ENCODE measurements at regions of chr1 and their contacts with region 1.

Region 1: DNA sequence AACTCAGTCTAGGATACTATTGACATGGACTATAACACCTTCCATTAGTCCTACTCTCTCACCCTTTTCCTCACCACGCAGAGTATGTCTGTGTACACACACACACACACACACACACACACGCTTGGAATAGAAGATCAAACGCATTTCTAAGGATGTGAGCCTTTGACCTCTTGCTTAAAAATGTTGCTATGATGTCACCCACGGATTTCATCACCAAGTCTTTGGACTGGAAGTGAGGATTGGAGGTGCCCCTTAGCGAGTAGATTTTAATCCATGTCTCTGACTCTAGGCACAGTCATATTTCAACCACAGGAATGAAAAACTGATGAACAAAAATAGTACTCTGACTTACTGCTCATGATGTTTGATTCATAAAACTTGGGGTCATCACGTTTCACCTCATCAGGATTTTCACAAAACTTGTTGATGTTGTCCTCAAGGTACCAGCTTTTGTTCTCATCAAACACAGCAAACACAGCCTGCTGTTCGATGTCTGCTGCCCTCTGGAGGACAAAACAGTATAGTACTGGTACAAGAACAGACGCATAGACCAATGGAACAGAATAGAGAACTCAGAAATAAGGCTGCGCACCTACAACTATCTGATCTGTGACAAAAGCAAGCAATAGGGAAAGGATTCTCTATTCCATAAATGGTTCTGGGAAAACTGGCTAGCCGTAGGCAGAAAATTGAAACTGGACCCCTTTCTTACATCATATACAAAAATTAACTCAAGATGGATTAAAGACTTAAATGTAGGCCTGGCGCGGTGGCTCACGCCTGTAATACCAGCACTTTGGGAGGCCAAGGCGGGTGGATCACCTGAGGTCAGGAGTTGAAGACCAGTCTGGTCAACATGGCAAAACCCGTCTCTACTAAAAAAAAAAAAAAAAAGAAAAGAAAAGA is 39.9 kb downstream of the F5 start:
- DNase-seq: peak; percentile 72 to 80
- H3K4me3 ChIP-seq: no peak overlapping the region
- H3K4me3 Mint-ChIP-seq: no peak overlapping the region
- H3K27ac Mint-ChIP-seq: no peak overlapping the region
- H3K4me1 ChIP-seq: peaks cover 27% of the 10 kb centered on the region
- H3K4me1 Mint-ChIP-seq: peaks cover 26% of the 10 kb centered on the region
- H3K27me3 ChIP-seq: no peaks in the 10 kb centered on the region
- H3K27me3 Mint-ChIP-seq: no peaks in the 10 kb centered on the region
- CTCF ChIP-seq: peak; percentile 80 to 82

Region 2: DNA sequence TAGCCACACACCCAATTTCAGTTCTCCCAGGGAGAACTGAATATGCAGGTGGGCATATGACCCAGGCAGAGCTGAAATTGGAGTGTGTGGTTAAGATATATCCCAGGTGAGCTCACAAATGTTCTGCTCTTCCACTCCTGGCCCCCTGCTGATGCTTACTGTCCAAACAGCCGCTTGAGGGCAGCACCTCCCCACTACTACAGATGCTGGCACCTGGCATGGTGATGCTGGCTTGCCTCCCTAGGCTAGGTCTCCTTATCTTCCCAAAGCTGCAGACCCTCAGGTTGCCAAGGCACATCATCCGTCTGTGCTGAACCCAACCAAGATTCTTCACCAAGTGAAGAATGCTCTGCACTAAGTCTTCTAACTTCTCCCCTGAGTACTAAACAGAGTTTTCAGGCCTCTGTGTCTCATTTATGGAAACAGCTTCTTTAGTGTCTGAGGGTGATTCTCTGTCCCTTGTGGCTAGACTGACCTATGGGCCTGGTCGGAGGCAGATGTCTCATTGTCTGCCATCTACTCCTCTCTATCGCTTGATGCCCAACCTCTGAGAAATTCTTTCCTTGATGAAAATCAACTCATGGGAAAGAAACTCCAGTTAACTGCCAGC is 942.7 kb before region 1 on chr1:
- CTCF ChIA-PET with region 1: no interaction called
- POLR2A ChIA-PET with region 1: no interaction called
- intact Hi-C with region 1: loop called (anchors 1 kb)
- DNase-seq: peak; percentile 79 to 81
- H3K4me3 ChIP-seq: no peak overlapping the region
- H3K4me3 Mint-ChIP-seq: no peak overlapping the region
- H3K27ac Mint-ChIP-seq: no peak overlapping the region
- H3K4me1 ChIP-seq: peaks cover 4% of the 10 kb centered on the region; the same call in 1 of the 2 replicates
- H3K4me1 Mint-ChIP-seq: peaks cover 11% of the 10 kb centered on the region
- H3K27me3 ChIP-seq: no peaks in the 10 kb centered on the region
- H3K27me3 Mint-ChIP-seq: no peaks in the 10 kb centered on the region
- CTCF ChIP-seq: peak; percentile 87 to 89

Region 3: DNA sequence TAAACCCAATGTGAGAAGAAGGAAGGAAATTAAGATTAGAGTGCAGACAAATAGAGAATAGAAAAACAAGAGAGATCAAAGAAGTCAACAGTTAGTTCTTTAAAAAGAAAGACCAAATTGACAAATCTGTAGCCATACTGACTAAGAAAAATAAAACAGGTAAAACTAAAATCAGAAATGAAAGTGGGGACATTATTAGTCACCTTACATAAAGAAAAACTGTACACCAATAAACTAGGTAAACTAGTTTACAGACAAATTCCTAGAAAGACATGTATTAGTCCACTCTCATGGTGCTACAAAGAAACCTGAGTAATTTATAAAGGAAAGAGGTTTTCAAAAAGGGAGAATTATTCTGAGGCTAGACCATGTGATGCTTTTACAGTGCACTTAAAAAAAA is 156.0 kb before region 1 on chr1:
- CTCF ChIA-PET with region 1: no interaction called
- POLR2A ChIA-PET with region 1: no interaction called
- intact Hi-C with region 1: loop called (anchors 5 kb)
- DNase-seq: no peak
- H3K4me3 ChIP-seq: no peak overlapping the region
- H3K4me3 Mint-ChIP-seq: no peak overlapping the region
- H3K27ac Mint-ChIP-seq: no peak overlapping the region
- H3K4me1 ChIP-seq: no peaks in the 10 kb centered on the region
- H3K4me1 Mint-ChIP-seq: no peaks in the 10 kb centered on the region
- H3K27me3 ChIP-seq: no peaks in the 10 kb centered on the region
- H3K27me3 Mint-ChIP-seq: no peaks in the 10 kb centered on the region
- CTCF ChIP-seq: no peak

Region 4: DNA sequence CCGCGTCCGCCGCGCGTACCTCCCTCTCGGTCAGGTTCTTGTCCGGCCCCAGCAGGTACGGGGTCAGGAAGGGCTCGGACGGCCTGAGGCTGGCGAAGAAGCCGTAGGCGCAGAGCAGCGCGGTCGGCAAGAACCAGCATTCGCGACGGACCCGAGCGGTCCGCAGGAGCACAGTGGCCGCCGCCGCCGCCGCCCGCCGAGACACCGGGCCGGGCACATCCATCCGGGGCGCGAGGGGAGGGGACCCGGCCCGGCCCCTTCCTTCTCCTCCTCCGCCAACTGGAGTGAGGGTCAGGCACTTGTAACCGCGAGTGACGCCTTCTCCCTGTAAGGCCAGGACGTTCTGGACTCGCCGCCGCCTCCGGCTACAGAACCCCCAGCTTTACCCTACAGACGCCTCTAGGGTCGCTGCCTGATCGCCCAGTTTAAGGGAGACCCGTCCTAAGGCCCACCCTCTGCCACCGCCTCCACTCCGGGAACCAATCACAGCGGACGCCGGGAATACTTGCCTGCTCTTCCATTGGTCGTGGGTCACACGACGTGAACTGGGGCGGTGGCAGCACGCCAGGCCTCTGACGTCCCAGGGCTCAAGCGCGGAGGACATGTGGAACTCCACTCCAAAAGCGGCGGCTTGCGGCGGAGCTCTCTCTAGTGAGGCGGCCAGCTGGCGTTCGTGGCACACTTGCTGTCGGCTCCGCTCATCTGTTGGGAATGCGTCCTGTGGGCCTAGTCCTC is 60.6 kb before region 1 on chr1 and contains the start of gene SLC19A2:
- CTCF ChIA-PET with region 1: interaction called, 15 read pairs
- POLR2A ChIA-PET with region 1: interaction called, 4 read pairs
- intact Hi-C with region 1: loop called (anchors 1 kb)
- DNase-seq: peak; percentile 98 to 99
- H3K4me3 ChIP-seq: peak within 1 kb of the TSS; percentile 85
- H3K4me3 Mint-ChIP-seq: peak within 1 kb of the TSS; percentile 89
- H3K27ac Mint-ChIP-seq: peak within 1 kb of the TSS; percentile 94
- H3K4me1 ChIP-seq: peaks cover 39% of the 10 kb centered on the region
- H3K4me1 Mint-ChIP-seq: peaks cover 33% of the 10 kb centered on the region
- H3K27me3 ChIP-seq: no peaks in the 10 kb centered on the region
- H3K27me3 Mint-ChIP-seq: no peaks in the 10 kb centered on the region
- CTCF ChIP-seq: peak in 1 of 2 experiments; percentile 64
- total RNA-seq, gene SLC19A2: 28.7 and 31.5 TPM in 2 replicates

Region 5: GRCh38 chr1:169529068-169529696 is 17.2 kb before region 1 on chr1:
- CTCF ChIA-PET with region 1: interaction called, 4 read pairs
- POLR2A ChIA-PET with region 1: no interaction called
- intact Hi-C with region 1: loop called (anchors 1 kb)
- DNase-seq: peak; percentile 88 to 91
- H3K4me3 ChIP-seq: no peak overlapping the region
- H3K4me3 Mint-ChIP-seq: peak overlapping the region; percentile 57
- H3K27ac Mint-ChIP-seq: peak overlapping the region; percentile 98
- H3K4me1 ChIP-seq: peaks cover 65% of the 10 kb centered on the region
- H3K4me1 Mint-ChIP-seq: peaks cover 56% of the 10 kb centered on the region
- H3K27me3 ChIP-seq: no peaks in the 10 kb centered on the region
- H3K27me3 Mint-ChIP-seq: no peaks in the 10 kb centered on the region
- CTCF ChIP-seq: no peak

Region 6: GRCh38 chr1:169586395-169587255 is 40.3 kb after region 1 on chr1 and contains the start of gene F5:
- CTCF ChIA-PET with region 1: interaction called, 3 read pairs
- POLR2A ChIA-PET with region 1: no interaction called
- intact Hi-C with region 1: loop called (anchors 1 kb)
- DNase-seq: peak; percentile 75 to 80
- H3K4me3 ChIP-seq: peak within 1 kb of the TSS; percentile 23; the same call in 1 of the 2 replicates
- H3K4me3 Mint-ChIP-seq: peak within 1 kb of the TSS; percentile 54
- H3K27ac Mint-ChIP-seq: no peak within 1 kb of the TSS
- H3K4me1 ChIP-seq: peaks cover 6% of the 10 kb centered on the region; the same call in 1 of the 2 replicates
- H3K4me1 Mint-ChIP-seq: peaks cover 5% of the 10 kb centered on the region
- H3K27me3 ChIP-seq: no peaks in the 10 kb centered on the region
- H3K27me3 Mint-ChIP-seq: no peaks in the 10 kb centered on the region
- CTCF ChIP-seq: peak; percentile 43 to 64
- total RNA-seq, gene F5: 0.50 and 0.74 TPM in 2 replicates

Region 7: DNA sequence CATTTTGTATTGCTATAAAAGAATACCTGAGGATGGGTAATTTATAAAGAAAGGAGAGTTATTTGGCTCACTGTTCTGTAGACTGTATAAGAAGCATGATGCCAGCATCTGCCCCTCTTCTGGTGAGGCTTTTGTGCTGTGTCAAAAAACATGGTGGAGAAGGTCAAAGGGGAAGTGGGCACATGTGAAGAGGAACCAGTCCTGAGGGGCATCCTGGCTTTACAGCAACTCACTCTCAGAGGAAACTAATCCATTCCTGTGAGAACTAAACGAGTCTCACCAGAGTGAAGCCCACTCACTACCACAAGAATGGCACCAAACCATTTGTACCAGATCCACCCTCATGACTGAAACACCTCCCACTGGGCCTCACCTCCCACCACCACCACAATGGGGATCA is 102.4 kb after region 1 on chr1:
- CTCF ChIA-PET with region 1: no interaction called
- POLR2A ChIA-PET with region 1: no interaction called
- intact Hi-C with region 1: no loop called
- DNase-seq: no peak
- H3K4me3 ChIP-seq: no peak overlapping the region
- H3K4me3 Mint-ChIP-seq: no peak overlapping the region
- H3K27ac Mint-ChIP-seq: no peak overlapping the region
- H3K4me1 ChIP-seq: no peaks in the 10 kb centered on the region
- H3K4me1 Mint-ChIP-seq: no peaks in the 10 kb centered on the region
- H3K27me3 ChIP-seq: no peaks in the 10 kb centered on the region
- H3K27me3 Mint-ChIP-seq: peaks cover 17% of the 10 kb centered on the region
- CTCF ChIP-seq: no peak

Region 8: GRCh38 chr1:169711469-169712281 is 165.3 kb after region 1 on chr1 and contains the start of gene SELL:
- CTCF ChIA-PET with region 1: interaction called, 5 read pairs
- POLR2A ChIA-PET with region 1: no interaction called
- intact Hi-C with region 1: loop called (anchors 1 kb)
- DNase-seq: peak; percentile 74 to 80
- H3K4me3 ChIP-seq: no peak within 1 kb of the TSS
- H3K4me3 Mint-ChIP-seq: peak within 1 kb of the TSS; percentile 52
- H3K27ac Mint-ChIP-seq: no peak within 1 kb of the TSS
- H3K4me1 ChIP-seq: peaks cover 6% of the 10 kb centered on the region; the same call in 1 of the 2 replicates
- H3K4me1 Mint-ChIP-seq: peaks cover 9% of the 10 kb centered on the region
- H3K27me3 ChIP-seq: no peaks in the 10 kb centered on the region
- H3K27me3 Mint-ChIP-seq: peaks cover 4% of the 10 kb centered on the region
- CTCF ChIP-seq: peak; percentile 80 to 88
- total RNA-seq, gene SELL: not detected in 2 replicates

Measured in Caco-2 (cell line).